ENCODE measurements at regions of chr10 and their contacts with region 1.

Region 1: GRCh38 chr10:28628184-28628893 is 49.0 kb upstream of the BAMBI start:
- DNase-seq: peak in 1 of 2 donors; percentile 86
- H3K4me3 ChIP-seq: no peak overlapping the region
- H3K27ac ChIP-seq: no peak overlapping the region
- H3K4me1 ChIP-seq: peaks cover 0 to 8% of the 10 kb centered on the region in 2 donors
- H3K27me3 ChIP-seq: no peaks in the 10 kb centered on the region
- CTCF ChIP-seq: peak; percentile 73 to 89 (median 86)

Region 2: GRCh38 chr10:29392376-29393021 is 764.2 kb after region 1 on chr10:
- intact Hi-C with region 1: loop called (anchors 1 kb)
- DNase-seq: no peak
- H3K4me3 ChIP-seq: no peak overlapping the region
- H3K27ac ChIP-seq: no peak overlapping the region
- H3K4me1 ChIP-seq: no peaks in the 10 kb centered on the region
- H3K27me3 ChIP-seq: no peaks in the 10 kb centered on the region
- CTCF ChIP-seq: peak; percentile 25 to 81 (median 70)

Measured in ascending aorta (tissue), 2 donors.